ENCODE measurements at regions of chr1 and their contacts with region 1.

Region 1: DNA sequence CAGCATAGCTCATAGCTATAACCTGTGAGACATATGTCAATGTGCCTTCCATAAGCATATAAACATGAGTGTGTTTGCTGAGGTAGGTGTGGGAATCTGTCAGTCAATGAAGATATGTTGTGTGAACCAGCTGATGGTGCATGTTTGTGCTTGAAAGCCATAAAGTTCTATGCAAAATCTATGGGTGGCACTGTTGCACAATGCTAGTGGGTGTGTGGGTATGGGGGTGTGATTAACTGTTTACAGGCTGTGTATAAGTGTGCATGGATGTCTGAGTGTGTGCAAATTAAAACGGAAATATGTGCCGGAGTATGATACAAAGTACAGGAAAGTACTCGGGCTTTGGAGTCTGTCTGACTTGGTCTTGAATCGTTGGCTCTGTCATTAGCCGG is 1.0 kb upstream of the ATP2B4 start:
- DNase-seq: peak; percentile 45 to 83 (median 77)
- H3K4me3 ChIP-seq: peak overlapping the region; percentile 88
- H3K4me3 Mint-ChIP-seq: peak overlapping the region; percentile 69 to 100 (median 98)
- H3K27ac ChIP-seq: peak overlapping the region; percentile 93
- H3K27ac Mint-ChIP-seq: peak overlapping the region; percentile 81 to 99 (median 96)
- H3K4me1 ChIP-seq: peaks cover 31% of the 10 kb centered on the region
- H3K4me1 Mint-ChIP-seq: peaks cover 30 to 34% (median 33%) of the 10 kb centered on the region in 3 donors
- H3K27me3 ChIP-seq: no peaks in the 10 kb centered on the region
- H3K27me3 Mint-ChIP-seq: no peaks in the 10 kb centered on the region

Region 2: DNA sequence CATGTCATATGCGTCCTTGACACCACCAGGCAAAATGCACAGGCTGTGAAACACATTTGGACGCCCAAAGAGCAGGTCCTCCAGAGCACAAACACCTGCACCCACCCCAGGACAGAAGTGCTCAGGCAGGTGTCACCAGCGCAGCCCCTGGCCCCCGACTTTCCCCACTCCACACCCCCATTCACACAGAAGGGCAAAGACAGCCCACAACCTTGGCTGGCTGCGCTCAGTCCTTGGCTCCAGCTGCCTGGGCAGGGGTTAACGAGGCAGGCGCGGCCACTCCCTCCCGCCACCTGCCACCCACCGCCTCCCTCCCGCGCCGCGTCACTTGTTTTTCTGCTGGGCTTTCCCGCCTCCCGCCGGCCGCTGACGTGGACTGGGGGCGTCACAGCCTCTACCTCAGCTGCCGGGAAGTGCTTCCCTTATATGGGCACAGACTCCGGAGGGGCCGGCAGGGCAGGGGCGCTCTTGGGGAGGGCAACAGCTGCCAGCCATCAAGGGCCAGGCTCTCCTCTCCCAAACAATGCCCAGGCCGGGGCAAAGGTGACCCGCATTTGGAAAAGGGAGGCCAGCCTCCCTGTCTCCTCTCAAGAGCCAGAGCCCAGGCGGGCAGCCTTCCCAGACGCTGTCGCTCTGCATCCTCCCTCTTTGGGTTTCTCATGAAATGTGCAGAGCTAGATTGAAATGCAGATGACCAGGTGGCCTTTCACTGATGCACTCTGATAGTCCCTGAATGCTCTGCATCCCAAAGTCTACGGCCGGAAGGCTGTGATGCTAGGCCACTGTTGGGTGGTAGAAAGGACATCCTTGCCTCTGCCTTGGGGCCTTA is 335.1 kb before region 1 on chr1:
- CTCF ChIA-PET with region 1: no interaction called
- POLR2A ChIA-PET with region 1: no interaction called
- DNase-seq: peak; percentile 95 to 98 (median 97)
- H3K4me3 ChIP-seq: peak overlapping the region; percentile 76
- H3K4me3 Mint-ChIP-seq: peak overlapping the region; percentile 63 to 87 (median 85)
- H3K27ac ChIP-seq: peak overlapping the region; percentile 99
- H3K27ac Mint-ChIP-seq: peak overlapping the region; percentile 99 to 100 (median 100)
- H3K4me1 ChIP-seq: peaks cover 62% of the 10 kb centered on the region
- H3K4me1 Mint-ChIP-seq: peaks cover 64 to 73% (median 64%) of the 10 kb centered on the region in 3 donors
- H3K27me3 ChIP-seq: no peaks in the 10 kb centered on the region
- H3K27me3 Mint-ChIP-seq: peaks cover 0 to 13% of the 10 kb centered on the region in 2 donors

Region 3: GRCh38 chr1:203504397-203505250 is 121.0 kb before region 1 on chr1:
- CTCF ChIA-PET with region 1: interaction called, 16 read pairs
- POLR2A ChIA-PET with region 1: no interaction called
- DNase-seq: peak; percentile 51 to 77 (median 58)
- H3K4me3 ChIP-seq: no peak overlapping the region
- H3K4me3 Mint-ChIP-seq: no peak overlapping the region
- H3K27ac ChIP-seq: no peak overlapping the region
- H3K27ac Mint-ChIP-seq: no peak overlapping the region
- H3K4me1 ChIP-seq: no peaks in the 10 kb centered on the region
- H3K4me1 Mint-ChIP-seq: peaks cover 1 to 6% (median 5%) of the 10 kb centered on the region in 3 donors
- H3K27me3 ChIP-seq: no peaks in the 10 kb centered on the region
- H3K27me3 Mint-ChIP-seq: peaks cover 3 to 4% of the 10 kb centered on the region in 2 donors

Region 4: GRCh38 chr1:203528063-203528462 is 97.6 kb before region 1 on chr1:
- CTCF ChIA-PET with region 1: no interaction called
- POLR2A ChIA-PET with region 1: no interaction called
- DNase-seq: no peak
- H3K4me3 ChIP-seq: no peak overlapping the region
- H3K4me3 Mint-ChIP-seq: no peak overlapping the region
- H3K27ac ChIP-seq: no peak overlapping the region
- H3K27ac Mint-ChIP-seq: no peak overlapping the region
- H3K4me1 ChIP-seq: no peaks in the 10 kb centered on the region
- H3K4me1 Mint-ChIP-seq: peaks cover 0 to 1% (median 0%) of the 10 kb centered on the region in 3 donors
- H3K27me3 ChIP-seq: no peaks in the 10 kb centered on the region
- H3K27me3 Mint-ChIP-seq: no peaks in the 10 kb centered on the region

Region 5: GRCh38 chr1:203601737-203602309 is 23.8 kb before region 1 on chr1:
- CTCF ChIA-PET with region 1: interaction called, 36 read pairs
- POLR2A ChIA-PET with region 1: interaction called, 13 read pairs
- DNase-seq: no peak
- H3K4me3 ChIP-seq: no peak overlapping the region
- H3K4me3 Mint-ChIP-seq: no peak overlapping the region
- H3K27ac ChIP-seq: no peak overlapping the region
- H3K27ac Mint-ChIP-seq: peak overlapping the region in 1 of 8 donors; percentile 58
- H3K4me1 ChIP-seq: peaks cover 14% of the 10 kb centered on the region
- H3K4me1 Mint-ChIP-seq: peaks cover 21 to 43% (median 33%) of the 10 kb centered on the region in 3 donors
- H3K27me3 ChIP-seq: no peaks in the 10 kb centered on the region
- H3K27me3 Mint-ChIP-seq: peaks cover 0 to 6% of the 10 kb centered on the region in 2 donors

Region 6: GRCh38 chr1:203649999-203650855 is 24.6 kb after region 1 on chr1:
- CTCF ChIA-PET with region 1: interaction called, 31 read pairs
- POLR2A ChIA-PET with region 1: interaction called, 35 read pairs
- DNase-seq: peak; percentile 41 to 89 (median 71)
- H3K4me3 ChIP-seq: peak overlapping the region; percentile 32
- H3K4me3 Mint-ChIP-seq: peak overlapping the region; percentile 68 to 93 (median 85)
- H3K27ac ChIP-seq: peak overlapping the region; percentile 57
- H3K27ac Mint-ChIP-seq: peak overlapping the region; percentile 93 to 100 (median 97)
- H3K4me1 ChIP-seq: peaks cover 66% of the 10 kb centered on the region
- H3K4me1 Mint-ChIP-seq: peaks cover 73 to 87% (median 82%) of the 10 kb centered on the region in 3 donors
- H3K27me3 ChIP-seq: no peaks in the 10 kb centered on the region
- H3K27me3 Mint-ChIP-seq: no peaks in the 10 kb centered on the region

Region 7: DNA sequence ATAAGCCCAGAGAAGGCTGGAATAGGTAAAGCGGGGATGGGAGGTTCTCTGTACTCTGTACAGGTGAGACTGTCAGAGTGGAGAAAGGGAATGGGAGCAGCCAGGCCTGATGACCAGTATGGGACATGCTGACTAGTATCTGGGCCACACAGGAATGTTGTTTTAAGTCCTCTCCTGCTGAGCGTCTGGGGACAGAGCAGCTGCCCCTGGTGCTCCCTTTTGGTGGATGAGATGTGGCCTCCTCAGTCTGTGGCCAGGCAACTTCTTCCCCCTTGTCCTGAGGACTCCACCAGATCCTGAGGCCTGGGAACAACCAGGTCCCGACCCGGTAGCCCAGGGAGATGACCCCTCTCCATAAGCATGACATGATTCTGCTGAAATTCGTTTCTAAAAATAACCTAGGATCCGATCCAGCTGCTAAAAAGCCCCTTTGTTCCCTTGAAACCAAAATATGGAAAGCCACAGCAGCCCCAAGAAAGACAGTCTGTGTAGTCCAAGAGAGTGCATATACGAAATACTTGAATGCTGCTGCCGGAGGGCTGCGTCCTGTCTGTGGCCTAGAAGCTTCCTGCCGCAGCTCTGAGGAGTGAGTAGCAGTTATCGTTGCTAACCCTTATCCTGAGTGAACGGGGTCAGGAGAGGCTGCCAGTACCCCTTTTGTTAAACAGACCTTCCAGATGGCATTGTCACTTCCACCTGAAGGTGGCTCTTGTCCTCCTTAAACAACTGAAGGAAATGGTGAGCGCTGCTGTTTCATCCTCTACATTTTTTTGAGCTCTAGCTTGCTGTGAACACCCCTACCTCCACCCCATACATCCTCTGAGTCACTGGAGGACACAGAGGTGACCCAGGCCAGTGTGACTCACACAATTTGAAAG is 48.2 kb after region 1 on chr1:
- CTCF ChIA-PET with region 1: interaction called, 56 read pairs
- POLR2A ChIA-PET with region 1: interaction called, 32 read pairs
- DNase-seq: peak; percentile 59 to 87 (median 74)
- H3K4me3 ChIP-seq: peak overlapping the region; percentile 11
- H3K4me3 Mint-ChIP-seq: peak overlapping the region; percentile 13 to 88 (median 83)
- H3K27ac ChIP-seq: peak overlapping the region; percentile 67
- H3K27ac Mint-ChIP-seq: peak overlapping the region; percentile 85 to 99 (median 97)
- H3K4me1 ChIP-seq: peaks cover 63% of the 10 kb centered on the region
- H3K4me1 Mint-ChIP-seq: peaks cover 68 to 98% (median 81%) of the 10 kb centered on the region in 3 donors
- H3K27me3 ChIP-seq: no peaks in the 10 kb centered on the region
- H3K27me3 Mint-ChIP-seq: no peaks in the 10 kb centered on the region

Region 8: DNA sequence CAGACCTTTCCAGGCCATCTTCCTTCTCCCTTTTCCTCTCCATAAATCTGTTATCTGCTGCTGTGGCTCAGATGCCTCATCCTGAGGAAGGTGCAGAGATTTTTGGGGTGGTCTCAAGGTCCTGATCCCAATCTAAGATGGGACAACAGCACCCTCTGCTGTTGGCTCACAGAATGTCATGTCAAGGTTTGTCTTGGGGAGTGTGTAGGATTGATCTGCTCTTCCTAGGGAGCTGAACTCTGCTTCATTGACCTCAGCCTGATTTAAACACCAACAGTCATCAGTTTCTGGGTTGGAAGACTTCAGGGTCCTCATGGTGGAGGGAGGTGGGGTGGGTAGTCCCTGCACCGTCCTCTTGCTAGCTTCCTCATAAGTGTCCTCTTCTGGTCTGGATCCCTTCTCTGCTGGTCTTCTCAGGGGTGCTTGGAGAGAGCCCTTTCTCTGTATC is 76.5 kb after region 1 on chr1:
- CTCF ChIA-PET with region 1: interaction called, 126 read pairs
- POLR2A ChIA-PET with region 1: interaction called, 10 read pairs
- DNase-seq: peak; percentile 34 to 69 (median 53)
- H3K4me3 ChIP-seq: no peak overlapping the region
- H3K4me3 Mint-ChIP-seq: no peak overlapping the region
- H3K27ac ChIP-seq: no peak overlapping the region
- H3K27ac Mint-ChIP-seq: peak overlapping the region; percentile 19 to 97 (median 90)
- H3K4me1 ChIP-seq: no peaks in the 10 kb centered on the region
- H3K4me1 Mint-ChIP-seq: peaks cover 10 to 20% (median 13%) of the 10 kb centered on the region in 3 donors
- H3K27me3 ChIP-seq: no peaks in the 10 kb centered on the region
- H3K27me3 Mint-ChIP-seq: no peaks in the 10 kb centered on the region